WTC11 (cell line): ENCODE measurements at regions of chr16 and their contacts with region 1.

Region 1: DNA sequence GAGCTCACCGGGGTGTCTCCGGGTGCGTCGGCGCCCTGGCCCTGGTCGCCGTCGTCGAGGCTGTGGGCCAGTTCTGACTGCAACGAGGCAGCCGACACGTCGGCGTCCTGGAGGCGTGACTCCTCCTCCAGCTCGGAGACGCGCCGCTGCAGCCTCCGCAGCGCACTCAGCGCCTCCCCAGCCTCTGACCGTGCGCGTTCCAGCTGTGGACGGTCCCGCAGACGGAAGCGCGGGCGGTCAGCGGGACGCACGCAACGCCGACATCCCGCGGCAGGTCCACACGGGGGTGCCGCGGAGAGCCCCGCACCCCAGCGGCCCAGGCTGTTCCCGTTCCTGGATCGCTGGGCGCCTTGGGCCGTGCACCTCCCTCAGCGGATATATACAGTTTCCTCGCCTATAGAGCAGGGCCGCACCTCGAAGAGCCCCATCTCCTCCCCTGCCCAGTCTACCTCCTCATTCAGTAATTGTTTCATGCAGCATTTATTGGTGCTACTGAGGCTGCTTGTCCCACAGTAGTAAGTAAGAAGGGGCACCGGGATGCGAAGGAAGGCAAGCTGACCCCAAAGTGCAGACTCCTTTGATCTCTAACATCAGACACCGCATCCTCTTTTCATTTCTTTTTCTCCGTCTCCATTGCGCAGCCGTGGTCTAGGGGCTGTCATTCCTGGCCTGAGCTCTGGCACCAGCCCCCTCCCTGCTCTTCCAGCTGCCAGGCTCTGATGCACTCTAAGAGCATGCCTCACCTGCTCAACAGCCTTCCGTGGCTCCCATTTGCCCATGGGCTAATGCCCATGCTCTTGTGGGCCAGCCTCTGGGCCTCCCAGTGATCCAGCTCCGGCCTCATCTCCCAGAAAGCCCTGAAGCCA is 5.9 kb downstream of the THOC6 start:
- DNase-seq: no peak
- ATAC-seq: no peak
- H3K4me3 Mint-ChIP-seq: no peak overlapping the region
- H3K27ac Mint-ChIP-seq: no peak overlapping the region
- H3K4me1 Mint-ChIP-seq: peaks cover 22% of the 10 kb centered on the region
- H3K27me3 Mint-ChIP-seq: no peaks in the 10 kb centered on the region
- CTCF ChIP-seq: no peak

Region 2: GRCh38 chr16:2905431-2906387 is 124.1 kb before region 1 on chr16:
- CTCF ChIA-PET with region 1: no interaction called
- POLR2A ChIA-PET with region 1: no interaction called
- DNase-seq: peak; percentile 100
- ATAC-seq: peak; percentile 82
- H3K4me3 Mint-ChIP-seq: peak overlapping the region; percentile 97
- H3K27ac Mint-ChIP-seq: peak overlapping the region; percentile 91
- H3K4me1 Mint-ChIP-seq: peaks cover 17% of the 10 kb centered on the region
- H3K27me3 Mint-ChIP-seq: peaks cover 18% of the 10 kb centered on the region
- CTCF ChIP-seq: no peak

Region 3: DNA sequence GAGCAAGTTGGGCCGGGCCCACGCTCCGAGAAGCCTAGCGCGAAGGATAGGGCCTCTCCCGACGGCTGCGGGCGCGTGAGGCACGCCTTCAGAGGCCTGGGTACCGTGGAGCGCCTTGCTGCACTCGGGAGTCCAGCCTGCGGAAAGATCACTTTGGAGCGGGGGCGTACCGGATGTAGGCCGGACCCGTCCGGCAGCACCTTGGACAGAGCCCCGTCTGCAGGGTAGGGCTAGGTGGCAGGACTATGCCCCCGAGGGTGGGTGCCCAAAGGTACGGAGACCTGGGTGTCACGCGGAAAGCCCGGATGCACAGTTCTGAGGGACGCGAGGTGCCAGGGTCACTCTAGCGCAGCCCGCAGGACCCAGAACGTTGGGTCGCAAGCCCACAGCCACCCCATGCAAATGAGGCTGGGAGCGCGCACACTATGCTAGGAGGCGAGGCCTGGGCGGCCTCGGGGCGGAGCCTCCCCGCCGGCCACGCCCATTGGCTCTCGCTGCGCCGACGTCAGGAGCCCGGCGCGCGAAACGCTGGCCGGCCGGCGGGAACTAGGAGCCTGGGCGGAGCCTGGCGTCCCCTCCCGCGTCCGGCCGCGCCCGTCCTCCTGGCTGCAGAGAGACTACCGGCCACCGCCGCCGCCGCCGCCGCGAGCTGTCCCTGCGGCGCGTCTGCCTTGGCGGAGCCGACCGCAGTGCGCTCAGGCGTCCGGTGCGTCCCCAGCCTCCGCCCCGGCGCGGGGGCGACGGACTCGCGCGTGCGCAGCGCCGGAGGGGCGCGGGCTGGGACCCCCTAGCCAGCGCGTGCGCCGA is 60.8 kb before region 1 on chr16 and contains the start of gene PAQR4:
- CTCF ChIA-PET with region 1: interaction called, 28 read pairs
- POLR2A ChIA-PET with region 1: interaction called, 7 read pairs
- DNase-seq: peak; percentile 89
- ATAC-seq: peak; percentile 62
- H3K4me3 Mint-ChIP-seq: peak within 1 kb of the TSS; percentile 66
- H3K27ac Mint-ChIP-seq: no peak within 1 kb of the TSS
- H3K4me1 Mint-ChIP-seq: peaks cover 27% of the 10 kb centered on the region
- H3K27me3 Mint-ChIP-seq: peaks cover 33% of the 10 kb centered on the region
- CTCF ChIP-seq: no peak
- total RNA-seq, gene PAQR4: 21.1 to 32.4 TPM (median 21.5 TPM) in 3 replicates

Region 4: DNA sequence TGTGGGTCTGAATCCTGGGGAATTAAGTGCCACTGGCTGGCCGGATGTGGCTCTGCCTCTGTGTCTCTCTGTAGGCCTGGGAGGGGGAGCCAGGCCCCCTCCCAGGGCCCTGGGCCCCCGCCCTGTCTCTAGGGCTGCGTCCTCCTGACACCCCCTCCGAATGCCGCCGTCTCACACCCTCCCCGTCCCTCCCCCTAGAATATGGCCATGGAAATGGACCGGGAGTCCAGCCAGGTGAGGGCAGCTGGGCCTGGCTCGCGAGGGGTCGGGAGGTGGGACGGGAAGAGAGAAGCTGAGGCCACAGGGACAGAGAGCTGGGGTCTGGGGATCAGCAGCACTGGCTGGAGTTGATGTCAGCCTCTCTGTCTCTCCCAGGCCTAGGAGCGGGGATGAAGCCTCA is 33.5 kb before region 1 on chr16:
- CTCF ChIA-PET with region 1: interaction called, 355 read pairs
- POLR2A ChIA-PET with region 1: interaction called, 502 read pairs
- DNase-seq: no peak
- ATAC-seq: no peak
- H3K4me3 Mint-ChIP-seq: no peak overlapping the region
- H3K27ac Mint-ChIP-seq: no peak overlapping the region
- H3K4me1 Mint-ChIP-seq: no peaks in the 10 kb centered on the region; the same call in 1 of the 2 replicates
- H3K27me3 Mint-ChIP-seq: no peaks in the 10 kb centered on the region
- CTCF ChIP-seq: no peak

Region 5: GRCh38 chr16:3045357-3045728 is 15.6 kb after region 1 on chr16:
- CTCF ChIA-PET with region 1: interaction called, 152 read pairs
- POLR2A ChIA-PET with region 1: interaction called, 4 read pairs
- DNase-seq: peak; percentile 60
- ATAC-seq: peak; percentile 18
- H3K4me3 Mint-ChIP-seq: peak overlapping the region; percentile 89
- H3K27ac Mint-ChIP-seq: peak overlapping the region; percentile 74
- H3K4me1 Mint-ChIP-seq: peaks cover 13% of the 10 kb centered on the region
- H3K27me3 Mint-ChIP-seq: peaks cover 26% of the 10 kb centered on the region
- CTCF ChIP-seq: no peak

Region 6: DNA sequence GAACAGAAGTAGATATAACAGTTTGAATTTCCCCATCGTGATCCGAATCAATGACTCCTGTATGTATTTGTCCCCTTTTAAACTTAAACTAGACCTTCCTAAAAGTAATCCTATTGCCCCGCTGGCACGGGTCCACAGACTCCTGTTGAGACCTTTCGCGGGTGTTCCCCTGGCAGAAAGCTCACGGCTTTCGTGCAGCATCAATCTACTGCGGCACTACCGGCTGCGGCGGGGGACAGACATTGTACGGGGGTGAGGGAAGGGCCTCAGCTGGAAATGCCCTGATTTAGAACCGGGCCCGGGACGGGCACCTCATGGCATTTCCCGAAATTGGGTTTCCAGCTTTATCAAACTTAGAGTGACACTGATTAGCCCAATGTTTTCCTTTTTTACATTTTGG is 50.3 kb after region 1 on chr16:
- CTCF ChIA-PET with region 1: interaction called, 13 read pairs
- POLR2A ChIA-PET with region 1: no interaction called
- DNase-seq: no peak
- ATAC-seq: no peak
- H3K4me3 Mint-ChIP-seq: no peak overlapping the region
- H3K27ac Mint-ChIP-seq: no peak overlapping the region; the same call in 1 of the 2 replicates
- H3K4me1 Mint-ChIP-seq: peaks cover 40% of the 10 kb centered on the region
- H3K27me3 Mint-ChIP-seq: no peaks in the 10 kb centered on the region
- CTCF ChIP-seq: no peak

Region 7: GRCh38 chr16:3212006-3212405 is 182.2 kb after region 1 on chr16:
- CTCF ChIA-PET with region 1: no interaction called
- POLR2A ChIA-PET with region 1: no interaction called
- DNase-seq: no peak
- ATAC-seq: no peak
- H3K4me3 Mint-ChIP-seq: no peak overlapping the region
- H3K27ac Mint-ChIP-seq: no peak overlapping the region
- H3K4me1 Mint-ChIP-seq: no peaks in the 10 kb centered on the region
- H3K27me3 Mint-ChIP-seq: peaks cover 51% of the 10 kb centered on the region
- CTCF ChIP-seq: no peak